ENCODE measurements at regions of chr12 and their contacts with region 1.

Region 1: DNA sequence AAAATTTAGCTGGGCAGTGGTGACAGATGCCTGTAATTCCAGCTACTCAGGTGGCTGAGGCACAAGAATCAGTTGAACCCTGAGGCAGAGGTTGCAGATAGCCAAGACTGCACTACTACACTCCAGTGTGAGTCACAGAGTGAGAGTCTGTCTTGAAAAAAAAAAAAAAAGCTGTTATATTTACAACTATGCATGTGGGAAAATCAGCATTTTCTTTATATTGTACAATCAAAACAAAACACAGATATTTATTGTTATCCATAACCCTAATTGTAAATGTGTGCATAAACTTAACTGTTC is 12.5 kb downstream of the C1R start:
- DNase-seq: peak; percentile 48 to 84
- H3K4me3 ChIP-seq: peak overlapping the region; percentile 16; the same call in 1 of the 2 replicates
- H3K27ac ChIP-seq: peak overlapping the region; percentile 92
- H3K4me1 ChIP-seq: peaks cover 19% of the 10 kb centered on the region
- H3K27me3 ChIP-seq: no peaks in the 10 kb centered on the region
- CTCF ChIP-seq: no peak

Region 2: DNA sequence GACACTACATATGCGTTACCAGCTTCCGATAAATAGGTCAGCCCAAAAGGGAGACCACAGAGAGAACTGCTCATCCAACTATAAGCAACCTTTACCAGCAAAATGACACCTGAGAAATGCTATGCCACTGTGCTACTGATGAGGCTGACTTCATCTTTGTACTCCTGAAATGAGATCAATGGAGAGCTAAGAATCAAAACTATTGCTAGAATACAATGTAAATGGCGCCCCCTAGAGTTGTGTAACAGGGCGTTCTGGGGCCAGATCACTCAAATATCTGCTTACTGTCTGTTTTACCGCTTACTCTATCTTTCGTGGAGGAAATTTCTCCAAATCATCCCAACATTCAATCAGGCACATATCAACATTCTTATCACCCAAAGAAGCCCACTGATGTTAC is 395.2 kb before region 1 on chr12:
- CTCF ChIA-PET with region 1: no interaction called
- POLR2A ChIA-PET with region 1: no interaction called
- intact Hi-C with region 1: no loop called
- DNase-seq: peak in 1 of 2 experiments; percentile 44
- H3K4me3 ChIP-seq: no peak overlapping the region
- H3K27ac ChIP-seq: no peak overlapping the region
- H3K4me1 ChIP-seq: peaks cover 19% of the 10 kb centered on the region
- H3K27me3 ChIP-seq: no peaks in the 10 kb centered on the region
- CTCF ChIP-seq: peak; percentile 77

Region 3: GRCh38 chr12:6978609-6979011 is 101.2 kb before region 1 on chr12:
- CTCF ChIA-PET with region 1: no interaction called
- POLR2A ChIA-PET with region 1: no interaction called
- intact Hi-C with region 1: no loop called
- DNase-seq: no peak
- H3K4me3 ChIP-seq: no peak overlapping the region
- H3K27ac ChIP-seq: peak overlapping the region; percentile 31
- H3K4me1 ChIP-seq: peaks cover 13% of the 10 kb centered on the region
- H3K27me3 ChIP-seq: no peaks in the 10 kb centered on the region
- CTCF ChIP-seq: no peak

Region 4: DNA sequence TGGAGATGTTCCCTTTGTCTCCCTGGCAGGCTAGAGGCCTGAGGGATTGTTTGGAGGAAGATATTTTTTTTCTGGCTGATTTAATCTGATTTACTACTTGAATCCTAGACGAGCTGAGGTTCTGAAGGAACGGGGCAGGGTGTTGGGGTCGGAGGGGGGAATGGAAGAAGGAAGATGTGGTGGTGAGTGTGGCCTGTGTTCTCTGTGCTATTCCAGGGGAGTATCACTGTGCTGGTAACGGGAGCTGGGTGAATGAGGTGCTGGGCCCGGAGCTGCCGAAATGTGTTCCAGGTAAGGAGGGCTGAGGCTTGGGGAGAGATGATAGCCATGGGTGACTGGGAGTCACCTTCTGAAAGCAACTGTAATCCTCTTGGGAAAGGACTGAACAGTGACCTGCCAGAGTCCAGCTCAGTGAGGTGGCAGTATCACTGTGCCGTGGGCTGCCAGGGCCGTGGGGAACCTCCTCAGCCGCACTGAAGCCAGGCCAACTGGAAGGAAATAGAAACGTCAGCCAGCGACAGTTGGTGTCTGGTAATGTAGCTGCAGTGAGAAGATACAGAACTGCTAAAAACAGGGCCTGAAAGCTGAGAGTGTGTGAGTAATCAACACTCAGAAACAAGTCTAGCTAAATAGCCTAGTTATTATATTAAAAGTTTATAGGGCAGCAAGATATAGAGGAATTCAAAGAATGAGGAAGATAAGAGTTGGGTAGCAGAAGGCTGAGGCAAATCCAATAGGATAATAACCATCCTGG is 11.4 kb before region 1 on chr12:
- CTCF ChIA-PET with region 1: interaction called, 5 read pairs
- POLR2A ChIA-PET with region 1: interaction called, 17 read pairs
- intact Hi-C with region 1: loop called (anchors 1 kb)
- DNase-seq: peak; percentile 61 to 89
- H3K4me3 ChIP-seq: no peak overlapping the region
- H3K27ac ChIP-seq: peak overlapping the region; percentile 65
- H3K4me1 ChIP-seq: peaks cover 21% of the 10 kb centered on the region
- H3K27me3 ChIP-seq: no peaks in the 10 kb centered on the region
- CTCF ChIP-seq: no peak

Measured in PC-9 (cell line).